ENCODE measurements at regions of chr4 and their contacts with region 1.

Region 1: DNA sequence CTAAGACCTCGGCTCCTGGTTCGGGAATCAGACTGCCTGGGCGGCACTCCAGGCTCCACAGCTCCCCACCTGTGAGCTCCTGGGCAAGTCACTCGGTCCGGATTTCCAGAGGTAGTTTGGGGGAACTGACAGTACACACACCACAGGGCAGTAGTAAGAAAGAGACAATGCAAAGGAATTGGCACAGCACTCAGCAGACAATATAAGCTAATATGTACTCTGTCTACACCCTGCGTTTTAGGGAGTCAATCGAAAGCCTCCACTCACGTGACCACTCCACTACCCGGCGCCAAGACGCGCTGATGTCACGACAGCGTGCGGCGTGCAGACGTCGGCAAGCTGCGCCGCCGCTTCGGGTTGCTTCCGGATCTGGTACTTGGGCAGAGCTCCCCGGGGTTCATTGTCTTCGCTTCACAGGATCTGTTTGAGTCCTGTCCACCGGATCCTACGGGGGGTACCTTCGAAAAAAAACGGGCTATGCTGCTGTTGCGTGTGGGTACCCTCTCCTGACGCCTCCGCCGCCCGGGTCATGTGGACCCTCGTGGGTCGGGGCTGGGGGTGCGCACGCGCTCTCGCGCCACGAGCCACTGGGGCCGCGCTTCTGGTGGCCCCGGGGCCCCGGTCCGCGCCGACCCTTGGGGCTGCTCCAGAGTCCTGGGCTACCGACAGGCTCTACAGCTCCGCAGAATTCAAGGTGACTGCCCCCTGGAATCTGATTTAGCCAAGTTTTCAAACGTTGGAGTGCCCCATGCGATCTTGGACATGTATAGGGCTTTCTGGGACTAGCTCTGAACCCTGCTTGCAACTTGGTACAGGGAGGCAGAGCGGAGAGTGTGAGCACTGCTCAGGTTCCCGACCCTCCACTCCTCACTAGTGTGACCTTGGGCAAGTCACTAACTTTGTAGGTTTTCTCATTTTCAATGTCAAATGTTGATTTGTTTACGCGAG is at the start of gene GUF1:
- DNase-seq: peak; percentile 89
- H3K4me3 ChIP-seq: peak within 1 kb of the TSS; percentile 88
- H3K27ac ChIP-seq: peak within 1 kb of the TSS; percentile 90
- H3K4me1 ChIP-seq: peaks cover 41% of the 10 kb centered on the region
- H3K27me3 ChIP-seq: no peaks in the 10 kb centered on the region
- CTCF ChIP-seq: no peak
- total RNA-seq, gene GUF1: 22.4 TPM

Region 2: DNA sequence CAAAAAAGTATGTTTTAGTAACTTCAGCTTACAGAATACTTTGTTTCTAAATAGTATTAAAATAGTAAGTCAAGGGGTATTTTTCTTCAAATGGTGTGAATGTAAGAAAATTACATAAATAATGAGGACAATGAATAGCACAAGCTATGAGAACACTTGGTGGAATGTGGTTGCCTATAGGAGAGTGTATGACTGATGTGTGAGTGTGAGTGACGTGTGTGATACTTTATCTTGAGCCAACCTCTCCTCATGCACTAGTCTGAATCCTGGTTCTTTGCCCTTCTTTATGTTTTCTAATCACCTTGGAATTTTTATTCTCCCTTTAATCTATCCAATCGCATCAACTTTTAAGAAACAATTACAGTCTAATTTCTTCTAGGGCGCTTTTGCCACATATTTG is 125.2 kb before region 1 on chr4:
- intact Hi-C with region 1: no loop called
- DNase-seq: no peak
- H3K4me3 ChIP-seq: no peak overlapping the region
- H3K27ac ChIP-seq: no peak overlapping the region
- H3K4me1 ChIP-seq: no peaks in the 10 kb centered on the region
- H3K27me3 ChIP-seq: no peaks in the 10 kb centered on the region
- CTCF ChIP-seq: no peak

Region 3: DNA sequence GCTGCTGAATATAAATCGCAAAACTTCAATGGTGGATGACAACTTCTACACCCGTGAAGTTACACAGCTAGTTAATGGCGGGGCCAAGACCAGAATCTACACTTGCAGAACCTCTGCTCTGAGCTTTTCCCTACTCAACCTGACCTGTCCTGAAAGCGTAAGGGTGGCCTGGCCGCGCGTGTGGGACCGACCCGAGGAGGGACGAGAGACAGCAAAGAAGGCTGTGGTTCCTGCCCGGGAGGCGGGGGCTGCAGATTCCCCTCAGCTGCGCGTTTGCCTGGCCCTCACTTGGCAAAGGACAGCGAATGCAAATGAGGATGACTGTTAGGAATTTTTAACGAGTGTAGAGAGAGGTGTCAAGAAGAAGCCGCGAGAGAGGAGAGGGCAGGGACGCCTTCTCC is 47.5 kb after region 1 on chr4:
- intact Hi-C with region 1: loop called (anchors 2 kb)
- DNase-seq: peak; percentile 33
- H3K4me3 ChIP-seq: peak overlapping the region; percentile 93
- H3K27ac ChIP-seq: peak overlapping the region; percentile 91
- H3K4me1 ChIP-seq: peaks cover 46% of the 10 kb centered on the region
- H3K27me3 ChIP-seq: no peaks in the 10 kb centered on the region
- CTCF ChIP-seq: no peak

Measured in left ventricle myocardium inferior (tissue), 1 donor.